Sciatic nerve (tissue), 2 donors: ENCODE measurements at regions of chr2 and their contacts with region 1.

Region 1: GRCh38 chr2:26846328-26847306 is 1.3 kb upstream of the DPYSL5 start:
- DNase-seq: peak; percentile 76
- ATAC-seq: peak; percentile 93

Region 2: DNA sequence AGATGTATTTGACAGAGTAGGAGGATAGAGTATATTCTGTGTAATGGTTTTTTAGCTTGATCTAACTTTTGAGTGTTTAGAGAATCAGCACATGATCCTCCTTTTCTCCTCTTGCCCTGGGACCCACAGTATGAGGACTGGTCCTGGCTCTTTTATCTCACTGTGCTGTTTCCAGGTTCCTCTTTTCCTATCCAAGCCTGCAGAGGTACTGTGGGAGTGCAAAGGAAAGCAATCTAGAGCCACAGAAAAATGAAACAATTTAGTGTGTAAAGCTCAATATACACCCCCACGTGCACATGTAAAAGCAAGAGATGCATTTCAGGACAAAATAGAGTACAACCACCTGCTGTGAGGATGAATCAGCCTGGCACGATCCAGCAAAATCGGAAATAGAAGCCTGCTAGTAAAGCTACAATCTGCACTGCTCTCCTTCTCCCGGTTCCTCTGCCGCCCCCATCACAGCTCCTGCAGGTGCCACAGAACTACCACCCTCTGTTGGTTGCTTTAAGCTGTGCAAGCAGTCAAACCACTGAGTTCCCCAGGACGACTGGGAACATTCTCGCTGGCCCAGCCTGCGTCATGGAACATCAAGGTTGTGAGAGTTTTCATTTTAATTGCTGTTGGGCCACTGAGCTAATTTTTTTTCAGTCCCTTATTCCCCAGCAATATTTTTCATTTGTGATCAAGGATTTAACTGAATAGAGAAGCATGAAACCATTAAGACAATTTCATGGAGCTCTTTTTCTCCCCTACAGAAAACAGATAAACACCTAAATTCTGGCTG is 76.0 kb after region 1 on chr2:
- intact Hi-C with region 1: loop called (anchors 5 kb)
- DNase-seq: no peak
- ATAC-seq: peak; percentile 88

Region 3: DNA sequence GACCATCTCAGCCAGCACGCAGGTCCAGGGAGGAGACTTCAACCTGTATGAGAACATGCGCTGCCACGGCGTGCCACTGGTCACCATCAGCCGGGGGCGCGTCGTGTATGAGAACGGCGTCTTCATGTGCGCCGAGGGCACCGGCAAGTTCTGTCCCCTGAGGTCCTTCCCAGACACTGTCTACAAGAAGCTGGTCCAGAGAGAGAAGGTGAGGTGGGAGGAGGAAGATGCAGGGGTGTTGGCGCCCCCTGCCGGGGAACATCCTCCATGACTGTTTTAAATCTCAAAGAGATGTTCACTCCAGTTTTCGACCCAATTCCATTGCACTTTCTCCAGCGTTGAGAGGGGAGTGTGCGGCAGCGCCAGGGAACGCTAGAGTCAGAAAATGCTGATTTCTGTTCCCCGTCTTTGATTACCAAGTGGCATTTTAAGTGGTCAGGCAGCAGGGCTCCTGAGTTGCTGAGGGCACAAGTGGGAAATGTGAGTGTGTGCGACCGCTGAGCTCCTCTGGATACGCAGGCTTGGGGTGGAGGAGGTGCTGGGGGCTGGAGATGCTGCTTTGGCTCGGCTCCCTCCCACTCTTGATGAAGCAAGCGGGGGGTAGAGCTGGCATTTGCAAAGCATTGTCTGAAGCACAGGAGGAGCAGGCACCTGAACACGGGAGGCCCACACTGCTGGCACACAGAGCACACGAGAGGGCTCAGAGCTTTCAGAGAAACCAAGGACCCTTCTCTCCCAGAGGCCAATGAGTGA is 96.1 kb after region 1 on chr2:
- intact Hi-C with region 1: loop called (anchors 5 kb)
- DNase-seq: peak; percentile 82
- ATAC-seq: peak; percentile 66

Region 4: GRCh38 chr2:27390822-27391679 is 544.4 kb after region 1 on chr2:
- intact Hi-C with region 1: no loop called
- DNase-seq: no peak
- ATAC-seq: no peak